ENCODE measurements at regions of chr19 and their contacts with region 1.

Region 1: DNA sequence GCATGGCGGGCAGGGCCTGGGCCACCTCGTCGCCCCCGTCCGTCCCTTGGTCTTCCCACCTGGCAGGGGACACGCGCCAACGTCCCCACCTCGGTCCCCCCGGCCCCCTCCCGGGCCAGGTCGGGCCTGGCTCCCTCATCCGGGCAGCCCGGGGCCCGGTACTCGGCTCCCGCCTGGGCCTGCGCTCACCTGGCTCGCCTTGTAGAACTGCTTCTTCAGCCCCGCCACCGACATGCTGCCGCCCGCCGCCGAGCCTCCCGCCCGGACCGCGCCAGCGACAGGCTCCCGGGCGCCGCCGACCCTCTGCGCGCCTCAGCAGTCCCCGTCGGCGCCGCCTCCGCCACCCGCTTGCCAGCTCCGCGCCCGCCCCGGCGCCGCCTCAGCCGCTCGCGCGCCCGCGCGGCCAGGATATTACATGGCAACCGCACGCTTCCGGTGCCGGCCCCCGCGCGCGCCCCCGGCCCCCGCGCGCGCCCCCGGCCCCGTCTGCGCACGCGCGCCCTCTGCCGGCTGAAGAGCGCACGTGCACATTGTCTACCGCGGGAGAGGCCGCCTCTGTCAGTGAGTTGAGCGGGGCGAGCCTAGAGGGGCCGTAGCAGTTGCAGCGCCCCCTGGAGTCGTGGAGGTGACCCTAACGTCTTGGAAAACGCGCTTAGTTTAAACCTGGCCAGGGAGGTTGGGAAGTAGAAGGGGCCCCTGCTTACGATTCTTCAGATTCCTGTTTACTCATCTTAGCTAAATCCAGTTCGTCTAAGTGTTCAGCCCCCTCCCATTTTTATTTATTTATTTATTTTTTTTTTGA is at the start of gene SH3GL1:
- DNase-seq: peak; percentile 83 to 95
- H3K4me3 ChIP-seq: peak within 1 kb of the TSS; percentile 58 to 93 (median 82)
- H3K27ac ChIP-seq: peak within 1 kb of the TSS; percentile 40; the same call in 1 of the 2 replicates
- H3K4me1 ChIP-seq: peaks cover 0 to 9% (median 4%) of the 10 kb centered on the region in 4 experiments; a peak in 4 of 7 replicates
- H3K27me3 ChIP-seq: no peaks in the 10 kb centered on the region
- CTCF ChIP-seq: peak; percentile 92 to 99 (median 96)
- EP300 ChIP-seq: peak in 1 of 2 experiments; percentile 57; a peak in 1 of 3 replicates
- POLR2A ChIP-seq: no peak; a peak in 1 of 3 replicates
- RAD21 ChIP-seq: peak; percentile 32 to 62; a peak in 3 of 4 replicates
- total RNA-seq, gene SH3GL1: 102 TPM in 2 replicates

Region 2: GRCh38 chr19:4301509-4302242 is 98.7 kb before region 1 on chr19:
- CTCF ChIA-PET with region 1: no interaction called
- POLR2A ChIA-PET with region 1: no interaction called
- DNase-seq: no peak
- H3K4me3 ChIP-seq: no peak overlapping the region
- H3K27ac ChIP-seq: no peak overlapping the region
- H3K4me1 ChIP-seq: peaks cover 0 to 11% (median under 1%) of the 10 kb centered on the region in 4 experiments; a peak in 5 of 7 replicates
- H3K27me3 ChIP-seq: no peaks in the 10 kb centered on the region
- CTCF ChIP-seq: no peak
- EP300 ChIP-seq: no peak
- POLR2A ChIP-seq: no peak
- RAD21 ChIP-seq: no peak

Region 3: DNA sequence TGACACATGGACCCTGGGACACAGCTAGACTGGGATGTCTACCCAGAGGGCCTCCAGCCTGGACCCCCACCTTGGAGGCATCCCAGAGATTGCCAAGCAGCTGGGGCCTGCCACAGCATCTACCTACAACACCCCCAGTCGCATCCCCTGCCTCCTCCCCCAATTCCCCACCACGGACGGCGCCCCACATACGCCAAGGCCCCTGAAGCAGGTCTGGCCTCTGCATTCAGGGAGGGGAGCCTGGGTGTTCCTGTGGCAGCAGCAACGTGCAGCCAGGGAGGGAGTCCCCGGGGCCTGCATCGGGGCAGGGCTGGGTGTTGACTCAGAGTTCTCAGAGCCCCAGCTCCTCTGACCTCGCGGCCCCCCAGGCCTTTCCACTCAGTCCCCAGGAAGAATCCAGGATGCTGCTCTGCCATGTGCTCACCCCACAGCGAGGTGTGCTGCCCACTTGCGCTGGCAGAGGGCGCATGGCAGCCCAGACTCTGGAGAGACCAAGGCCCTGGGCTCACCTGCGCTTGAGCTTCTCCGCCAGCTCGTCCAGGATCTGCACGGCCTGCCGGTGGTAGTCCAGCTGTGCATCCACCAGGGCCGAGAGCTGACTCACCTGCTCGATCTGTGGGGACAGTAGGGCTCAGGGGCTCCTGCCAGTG is 37.4 kb before region 1 on chr19:
- CTCF ChIA-PET with region 1: interaction called, 16 read pairs
- POLR2A ChIA-PET with region 1: interaction called, 5 read pairs
- DNase-seq: peak in 1 of 2 experiments; percentile 76
- H3K4me3 ChIP-seq: no peak overlapping the region
- H3K27ac ChIP-seq: no peak overlapping the region
- H3K4me1 ChIP-seq: peaks cover 0 to 13% (median 2%) of the 10 kb centered on the region in 4 experiments; a peak in 3 of 7 replicates
- H3K27me3 ChIP-seq: no peaks in the 10 kb centered on the region
- CTCF ChIP-seq: peak; percentile 60 to 77 (median 67)
- EP300 ChIP-seq: no peak
- POLR2A ChIP-seq: 0 out of 3 replicates have a peak, but pooled peaks of 1 of the 2 experiments have one; percentile 45
- RAD21 ChIP-seq: peak; percentile 51 to 58

Region 4: DNA sequence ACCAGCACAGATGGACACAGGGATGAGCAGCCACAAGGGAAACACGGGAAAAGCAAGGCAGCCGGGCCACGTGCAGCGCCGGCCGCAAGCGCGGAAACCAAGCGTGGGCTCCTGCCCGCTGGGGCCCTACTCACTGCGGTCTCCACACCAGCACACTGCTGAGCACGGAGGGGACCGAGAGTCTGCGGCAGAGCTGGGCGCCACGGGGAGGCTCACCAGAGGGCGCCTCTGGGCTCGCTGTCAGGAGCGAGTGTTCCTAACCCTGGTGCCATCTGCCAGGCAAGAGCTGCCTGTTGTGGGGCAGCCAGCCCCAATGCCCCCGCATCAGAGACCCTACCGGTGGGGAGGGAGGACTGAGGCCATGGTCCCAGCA is 30.5 kb before region 1 on chr19:
- CTCF ChIA-PET with region 1: interaction called, 38 read pairs
- POLR2A ChIA-PET with region 1: interaction called, 18 read pairs
- DNase-seq: peak in 1 of 2 experiments; percentile 74
- H3K4me3 ChIP-seq: no peak overlapping the region
- H3K27ac ChIP-seq: 0 out of 2 replicates have a peak overlapping the region, but pooled peaks have one; percentile 41
- H3K4me1 ChIP-seq: peaks cover 0 to 23% (median 18%) of the 10 kb centered on the region in 4 experiments; a peak in 6 of 7 replicates
- H3K27me3 ChIP-seq: no peaks in the 10 kb centered on the region
- CTCF ChIP-seq: peak; percentile 50 to 62 (median 52)
- EP300 ChIP-seq: no peak
- POLR2A ChIP-seq: no peak
- RAD21 ChIP-seq: peak; percentile 32 to 59

Region 5: GRCh38 chr19:4415352-4415751 is 15.0 kb after region 1 on chr19:
- CTCF ChIA-PET with region 1: interaction called, 22 read pairs
- POLR2A ChIA-PET with region 1: interaction called, 1,590 read pairs
- DNase-seq: no peak
- H3K4me3 ChIP-seq: peak overlapping the region in 2 of 4 experiments; percentile 15 to 35; a peak in 4 of 8 replicates
- H3K27ac ChIP-seq: peak overlapping the region; percentile 68; the same call in 1 of the 2 replicates
- H3K4me1 ChIP-seq: peaks cover 6 to 22% (median 7%) of the 10 kb centered on the region in 4 experiments; a peak in 6 of 7 replicates
- H3K27me3 ChIP-seq: no peaks in the 10 kb centered on the region
- CTCF ChIP-seq: no peak
- EP300 ChIP-seq: no peak
- POLR2A ChIP-seq: no peak; a peak in 1 of 3 replicates
- RAD21 ChIP-seq: no peak

Region 6: DNA sequence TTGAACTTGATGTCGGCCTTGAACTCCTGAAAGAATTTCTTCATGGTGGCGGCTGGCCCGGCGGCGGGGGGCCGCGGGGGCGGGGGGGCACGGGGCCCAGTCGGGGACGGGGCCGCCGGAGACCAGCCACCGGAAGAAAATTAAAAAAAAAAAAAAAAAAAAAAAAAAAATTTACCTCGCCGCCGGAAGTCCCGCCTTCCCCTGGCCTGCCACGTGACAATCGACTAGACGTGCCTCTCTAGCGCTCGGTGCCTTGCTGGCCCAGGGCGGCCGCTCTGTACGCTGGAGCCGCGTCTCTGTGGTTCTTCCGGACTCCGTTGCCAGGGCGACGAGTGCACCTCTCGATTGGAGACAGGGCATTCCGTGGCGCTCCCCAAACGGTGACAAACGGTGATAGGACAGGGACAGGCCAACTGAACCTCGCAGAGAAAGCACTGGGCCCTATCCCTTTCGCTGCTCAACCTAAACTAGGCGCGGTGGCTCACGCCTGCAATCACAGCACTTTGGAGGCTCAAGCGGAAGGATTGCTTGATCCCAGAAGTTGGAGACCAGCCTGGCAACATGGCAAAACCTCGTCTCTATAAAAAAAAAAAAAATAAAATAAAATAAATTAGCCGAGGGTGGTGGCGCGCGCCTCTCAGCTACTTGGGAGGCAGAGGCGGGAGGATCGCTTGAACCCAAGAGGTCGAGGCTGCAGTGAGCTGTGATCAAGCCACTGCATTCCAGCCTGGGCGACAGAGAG is 57.5 kb after region 1 on chr19 and contains the start of gene UBXN6:
- CTCF ChIA-PET with region 1: interaction called, 4 read pairs
- POLR2A ChIA-PET with region 1: interaction called, 1,590 read pairs
- DNase-seq: peak; percentile 94 to 96
- H3K4me3 ChIP-seq: peak within 1 kb of the TSS; percentile 63 to 75 (median 70)
- H3K27ac ChIP-seq: peak within 1 kb of the TSS; percentile 75; the same call in 1 of the 2 replicates
- H3K4me1 ChIP-seq: peaks cover 0 to 5% (median 2%) of the 10 kb centered on the region in 4 experiments; a peak in 4 of 7 replicates
- H3K27me3 ChIP-seq: no peaks in the 10 kb centered on the region
- CTCF ChIP-seq: no peak
- EP300 ChIP-seq: no peak
- POLR2A ChIP-seq: no peak; a peak in 1 of 3 replicates
- RAD21 ChIP-seq: no peak
- total RNA-seq, gene UBXN6: 28.0 and 29.9 TPM in 2 replicates

Region 7: DNA sequence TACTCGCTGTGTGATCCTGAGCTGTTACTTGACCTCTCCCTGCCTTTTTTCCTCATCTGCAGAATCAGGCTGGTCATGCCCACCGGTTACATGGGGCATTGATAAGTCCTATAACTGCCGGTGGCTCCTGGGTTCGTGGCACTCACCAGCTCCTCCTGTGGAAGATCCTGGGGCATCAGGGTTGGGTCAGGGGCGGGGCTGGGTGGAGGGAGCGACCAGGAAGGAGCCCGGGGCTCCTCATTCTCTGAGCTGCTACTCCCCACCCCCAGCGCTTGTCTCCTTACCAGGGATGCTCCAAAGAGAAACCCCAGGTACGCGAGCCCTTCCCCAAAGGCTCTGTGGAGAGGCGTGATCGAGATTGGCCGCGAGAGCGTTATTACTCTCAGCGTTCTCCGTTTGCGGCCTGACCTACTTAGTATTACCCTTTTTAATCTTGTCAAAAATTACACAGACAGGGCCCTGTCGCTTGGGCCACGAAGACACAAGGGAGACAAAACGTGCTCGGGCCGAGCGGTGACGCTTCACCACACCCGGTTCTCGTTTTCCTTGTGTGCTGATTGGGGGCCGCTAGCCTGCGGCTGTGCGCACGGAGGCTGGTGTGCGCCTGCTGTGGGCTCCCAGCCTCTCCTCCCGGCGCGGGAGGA is 82.5 kb after region 1 on chr19:
- CTCF ChIA-PET with region 1: no interaction called
- POLR2A ChIA-PET with region 1: no interaction called
- DNase-seq: no peak
- H3K4me3 ChIP-seq: no peak overlapping the region
- H3K27ac ChIP-seq: no peak overlapping the region
- H3K4me1 ChIP-seq: no peaks in the 10 kb centered on the region
- H3K27me3 ChIP-seq: no peaks in the 10 kb centered on the region
- CTCF ChIP-seq: no peak
- EP300 ChIP-seq: no peak
- POLR2A ChIP-seq: no peak
- RAD21 ChIP-seq: no peak

Region 8: GRCh38 chr19:4531562-4532165 is 131.3 kb after region 1 on chr19:
- CTCF ChIA-PET with region 1: no interaction called
- POLR2A ChIA-PET with region 1: no interaction called
- DNase-seq: no peak
- H3K4me3 ChIP-seq: no peak overlapping the region
- H3K27ac ChIP-seq: no peak overlapping the region
- H3K4me1 ChIP-seq: peaks cover 0 to 4% (median 3%) of the 10 kb centered on the region in 4 experiments; a peak in 3 of 7 replicates
- H3K27me3 ChIP-seq: peaks cover 0 to 18% (median 15%) of the 10 kb centered on the region in 4 experiments; a peak in 4 of 7 replicates
- CTCF ChIP-seq: no peak
- EP300 ChIP-seq: no peak
- POLR2A ChIP-seq: no peak
- RAD21 ChIP-seq: no peak

Measured in H1 (cell line).